ENCODE measurements at regions of chr3 and their contacts with region 1.

Region 1: GRCh38 chr3:16048435-16049318 is 125.8 kb upstream of the GALNT15 start:
- DNase-seq: peak; percentile 75
- H3K4me3 ChIP-seq: peak overlapping the region in 1 of 3 experiments; percentile 35
- H3K27ac ChIP-seq: no peak overlapping the region
- H3K4me1 ChIP-seq: peaks cover 18% of the 10 kb centered on the region
- H3K27me3 ChIP-seq: no peaks in the 10 kb centered on the region
- CTCF ChIP-seq: peak; percentile 60 to 67
- POLR2A ChIP-seq: no peak

Region 2: DNA sequence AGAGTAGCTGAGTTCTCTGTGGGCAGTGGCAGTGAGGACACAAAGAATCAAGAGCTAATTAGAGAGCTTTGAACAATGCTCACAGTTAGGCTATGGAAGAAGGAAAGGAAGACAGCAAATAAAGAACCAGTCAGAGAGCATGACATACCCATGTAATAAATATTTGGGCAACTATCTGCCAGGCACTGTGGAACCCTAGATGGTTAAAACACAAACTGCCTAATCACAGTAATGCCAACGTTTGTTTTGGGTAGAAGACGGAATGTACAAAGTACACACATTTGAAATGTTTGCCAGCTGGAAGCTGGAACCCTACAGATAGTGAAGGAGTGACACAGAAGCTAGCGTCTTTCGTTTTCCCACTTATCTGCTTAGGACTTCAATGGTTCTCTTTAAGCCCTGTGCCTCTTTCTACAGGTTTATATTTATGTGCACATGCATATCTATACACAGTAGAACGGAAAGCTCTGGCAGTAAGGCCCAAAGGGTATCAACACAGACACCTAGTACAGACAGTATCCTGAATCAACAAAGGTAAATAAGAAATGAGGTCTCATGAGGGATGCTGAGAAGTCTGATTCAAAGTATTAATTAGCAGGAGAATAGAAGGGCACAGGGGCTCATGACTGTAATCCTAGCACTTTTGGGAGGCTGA is 295.5 kb before region 1 on chr3:
- CTCF ChIA-PET with region 1: no interaction called
- POLR2A ChIA-PET with region 1: no interaction called
- dilution Hi-C with region 1: no loop called
- intact Hi-C with region 1: no loop called
- DNase-seq: no peak
- H3K4me3 ChIP-seq: no peak overlapping the region
- H3K27ac ChIP-seq: no peak overlapping the region
- H3K4me1 ChIP-seq: peaks cover 2% of the 10 kb centered on the region
- H3K27me3 ChIP-seq: no peaks in the 10 kb centered on the region
- CTCF ChIP-seq: no peak
- POLR2A ChIP-seq: no peak

Region 3: DNA sequence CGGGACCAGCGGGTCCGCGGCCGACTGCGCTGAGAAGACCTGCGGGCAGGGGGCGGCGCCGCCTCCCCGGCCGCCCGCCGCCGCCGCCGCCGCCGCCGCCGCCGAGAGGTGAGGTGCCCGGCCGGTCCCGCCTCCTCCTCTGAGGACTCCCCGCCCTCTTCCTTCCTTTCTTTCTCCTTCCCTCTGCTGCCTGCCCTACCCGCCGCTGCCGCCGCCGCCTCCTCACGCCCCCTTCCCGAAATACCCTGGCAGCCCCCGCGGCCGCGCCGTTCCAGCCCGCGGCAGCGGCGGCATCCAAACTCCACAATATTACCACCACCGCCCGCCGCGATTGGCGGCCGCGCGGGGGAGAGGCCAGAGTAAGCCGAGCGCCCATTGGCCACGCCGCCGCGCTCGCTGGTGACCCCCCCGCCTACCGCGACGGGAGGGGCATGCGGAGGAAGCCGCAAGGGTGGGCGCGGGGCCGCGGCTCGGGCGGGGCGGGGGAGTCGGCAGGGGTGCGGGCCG is 189.1 kb before region 1 on chr3:
- CTCF ChIA-PET with region 1: no interaction called
- POLR2A ChIA-PET with region 1: interaction called, 13 read pairs
- dilution Hi-C with region 1: no loop called
- intact Hi-C with region 1: no loop called
- DNase-seq: peak; percentile 82
- H3K4me3 ChIP-seq: peak overlapping the region; percentile 79 to 99 (median 86)
- H3K27ac ChIP-seq: peak overlapping the region; percentile 17
- H3K4me1 ChIP-seq: peaks cover 16% of the 10 kb centered on the region
- H3K27me3 ChIP-seq: no peaks in the 10 kb centered on the region
- CTCF ChIP-seq: no peak
- POLR2A ChIP-seq: no peak

Region 4: DNA sequence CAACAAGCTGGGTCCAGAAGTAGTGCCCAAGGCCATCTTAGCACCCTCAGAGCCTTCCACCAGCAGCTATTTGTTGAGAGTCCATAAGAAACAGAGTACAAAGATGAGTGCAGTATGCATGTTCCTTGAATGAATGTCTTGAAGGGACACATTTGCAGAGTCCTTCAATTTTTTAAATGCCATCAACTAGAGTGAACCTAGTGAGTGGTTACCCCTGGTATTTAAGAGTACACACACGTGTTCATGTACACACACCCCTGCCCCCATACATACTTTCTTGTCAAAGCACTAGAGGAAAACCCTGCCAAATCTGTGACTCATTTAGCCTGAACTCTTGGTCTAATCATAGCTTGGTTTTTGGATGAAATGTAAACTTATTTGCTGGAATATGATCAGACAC is 41.3 kb after region 1 on chr3:
- CTCF ChIA-PET with region 1: interaction called, 8 read pairs
- POLR2A ChIA-PET with region 1: interaction called, 3 read pairs
- dilution Hi-C with region 1: no loop called
- intact Hi-C with region 1: loop called (anchors 1 kb)
- DNase-seq: peak; percentile 80
- H3K4me3 ChIP-seq: no peak overlapping the region
- H3K27ac ChIP-seq: no peak overlapping the region
- H3K4me1 ChIP-seq: peaks cover 23% of the 10 kb centered on the region
- H3K27me3 ChIP-seq: no peaks in the 10 kb centered on the region
- CTCF ChIP-seq: no peak
- POLR2A ChIP-seq: no peak

Region 5: DNA sequence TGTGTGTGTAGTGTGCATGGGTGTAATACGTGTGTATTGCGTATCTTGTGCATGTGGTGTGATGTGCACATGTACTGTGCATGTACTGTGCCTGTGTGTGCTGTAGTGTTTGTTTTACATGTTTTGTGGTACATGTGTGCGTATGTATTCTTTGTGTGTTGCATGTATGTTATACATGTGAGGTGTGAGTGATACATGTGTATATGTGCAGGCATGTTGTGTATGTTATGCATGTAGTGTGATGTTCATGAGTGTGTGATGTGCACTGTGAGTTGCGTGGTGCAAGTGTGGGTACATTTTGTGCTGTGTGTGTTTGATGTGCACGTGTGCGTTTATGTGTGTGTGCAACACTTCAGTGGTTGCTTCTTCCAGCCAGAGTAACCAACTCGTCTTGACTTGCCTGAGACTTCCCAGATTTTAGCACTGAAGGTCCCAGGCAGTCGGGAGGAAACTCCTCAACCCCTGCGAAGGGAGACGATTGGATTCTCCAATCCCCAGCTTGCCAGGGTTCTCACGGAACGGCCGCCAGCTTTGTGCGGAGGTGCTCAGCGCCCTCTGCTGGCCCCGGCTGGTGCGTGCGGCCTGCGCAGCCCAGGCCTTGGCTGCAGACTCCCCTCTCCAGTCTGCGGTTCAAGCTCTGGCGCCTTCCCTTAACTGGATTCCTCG is 129.4 kb after region 1 on chr3:
- CTCF ChIA-PET with region 1: interaction called, 459 read pairs
- POLR2A ChIA-PET with region 1: interaction called, 16 read pairs
- dilution Hi-C with region 1: no loop called
- intact Hi-C with region 1: loop called (anchors 1 kb)
- DNase-seq: peak; percentile 74
- H3K4me3 ChIP-seq: no peak overlapping the region
- H3K27ac ChIP-seq: no peak overlapping the region
- H3K4me1 ChIP-seq: peaks cover 11% of the 10 kb centered on the region
- H3K27me3 ChIP-seq: peaks cover 0 to 2% of the 10 kb centered on the region in 2 experiments
- CTCF ChIP-seq: peak; percentile 98 to 100
- POLR2A ChIP-seq: peak; percentile 14

Region 6: DNA sequence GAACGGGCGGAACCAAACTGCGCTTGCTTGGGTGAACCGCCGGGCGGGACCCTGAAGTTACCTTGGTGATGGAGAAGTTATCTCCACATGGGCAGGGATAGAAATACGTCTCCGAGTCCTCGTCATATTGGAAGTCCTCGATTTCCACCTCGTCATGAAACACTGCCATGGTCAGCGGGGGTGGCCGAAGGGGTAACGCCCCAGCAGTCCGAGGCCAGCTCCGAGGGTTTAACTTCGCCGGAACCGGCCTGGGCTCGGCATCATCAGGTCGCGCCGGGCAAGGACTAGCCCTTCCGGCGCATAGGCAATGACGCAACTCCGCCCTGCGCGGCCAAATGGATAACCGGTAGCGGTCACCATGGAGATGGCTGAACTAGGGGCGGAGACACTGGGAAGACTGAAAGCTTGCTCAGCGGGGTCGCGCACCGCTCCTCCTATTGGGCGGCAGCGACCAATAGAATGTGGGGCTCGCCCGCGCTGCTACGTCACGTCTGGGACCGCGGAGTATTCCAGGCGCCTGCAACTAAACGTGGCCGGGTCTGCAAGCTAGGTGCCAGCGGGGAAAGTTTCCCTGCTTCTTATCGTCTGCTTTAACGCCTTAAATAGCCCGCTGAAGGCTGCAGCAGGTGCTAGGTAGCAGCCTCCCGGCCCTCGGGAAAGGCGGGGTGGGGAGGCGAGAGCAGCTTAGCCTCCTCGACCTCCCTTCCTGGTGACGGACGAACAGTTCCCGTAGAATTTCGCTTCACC is 216.2 kb after region 1 on chr3 and contains the starts of genes DPH3 and OXNAD1:
- CTCF ChIA-PET with region 1: interaction called, 4 read pairs
- POLR2A ChIA-PET with region 1: interaction called, 12 read pairs
- dilution Hi-C with region 1: no loop called
- intact Hi-C with region 1: no loop called
- DNase-seq: peak; percentile 99
- H3K4me3 ChIP-seq: peak within 1 kb of the TSS; percentile 66 to 93 (median 72)
- H3K27ac ChIP-seq: peak within 1 kb of the TSS; percentile 82
- H3K4me1 ChIP-seq: peaks cover 23% of the 10 kb centered on the region
- H3K27me3 ChIP-seq: no peaks in the 10 kb centered on the region
- CTCF ChIP-seq: no peak
- POLR2A ChIP-seq: peak; percentile 82
- total RNA-seq, gene DPH3: 28.7 and 29.6 TPM in 2 replicates
- total RNA-seq, gene OXNAD1: 8.9 and 9.7 TPM in 2 replicates

Measured in endothelial cell of umbilical vein (primary cell).